Body of pancreas (tissue), 4 donors: ENCODE measurements at regions of chr7 and their contacts with region 1.

Region 1: DNA sequence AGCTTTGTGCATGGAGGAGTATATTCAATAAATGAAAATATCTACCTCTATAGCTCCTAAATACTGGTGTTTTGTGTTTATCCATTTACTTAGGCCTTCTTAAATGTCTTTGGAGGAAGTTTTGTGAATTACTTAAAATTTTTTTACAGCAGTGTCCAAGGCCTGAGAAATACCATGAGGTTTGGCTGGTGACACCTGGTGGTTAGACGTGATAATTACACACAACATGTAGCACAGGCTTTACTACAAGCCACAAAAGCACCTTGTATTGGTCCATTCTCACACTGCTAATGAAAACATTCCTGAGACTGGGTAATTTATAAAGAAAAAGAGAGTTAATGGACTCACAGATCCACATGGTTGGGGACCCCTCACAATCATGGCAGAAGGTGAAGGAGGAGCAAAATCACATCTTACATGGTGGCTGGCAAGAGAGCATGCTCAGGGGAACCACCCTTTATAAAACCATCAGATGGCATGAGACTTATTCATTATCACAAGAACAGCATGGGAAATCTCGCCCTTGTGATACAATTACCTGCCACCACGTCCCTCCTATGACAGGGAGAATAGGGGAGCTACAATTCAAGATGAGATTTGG is 20.6 kb downstream of the HYAL4 start:
- DNase-seq: peak; percentile 64 to 79 (median 70)
- ATAC-seq: peak; percentile 95
- H3K4me3 ChIP-seq: no peak overlapping the region
- H3K27ac ChIP-seq: no peak overlapping the region
- H3K4me1 ChIP-seq: peaks cover 13% of the 10 kb centered on the region
- H3K27me3 ChIP-seq: no peaks in the 10 kb centered on the region
- CTCF ChIP-seq: peak; percentile 49 to 88 (median 75)
- POLR2A ChIP-seq: no peak

Region 2: GRCh38 chr7:123674399-123675180 is 191.0 kb before region 1 on chr7:
- intact Hi-C with region 1: loop called (anchors 10 kb)
- DNase-seq: no peak
- ATAC-seq: no peak
- H3K4me3 ChIP-seq: no peak overlapping the region
- H3K27ac ChIP-seq: no peak overlapping the region
- H3K4me1 ChIP-seq: no peaks in the 10 kb centered on the region
- H3K27me3 ChIP-seq: no peaks in the 10 kb centered on the region
- CTCF ChIP-seq: no peak
- POLR2A ChIP-seq: no peak

Region 3: GRCh38 chr7:123797673-123798527 is 67.7 kb before region 1 on chr7:
- intact Hi-C with region 1: loop called (anchors 10 kb)
- DNase-seq: peak in 3 of 4 donors; percentile 22 to 74 (median 37)
- ATAC-seq: peak; percentile 100
- H3K4me3 ChIP-seq: no peak overlapping the region
- H3K27ac ChIP-seq: peak overlapping the region; percentile 11 to 77 (median 60)
- H3K4me1 ChIP-seq: peaks cover 18% of the 10 kb centered on the region
- H3K27me3 ChIP-seq: no peaks in the 10 kb centered on the region
- CTCF ChIP-seq: peak; percentile 23 to 91 (median 74)
- POLR2A ChIP-seq: no peak